Right ventricle myocardium superior (tissue), 1 donor: ENCODE measurements at regions of chr10 and their contacts with region 1.

Region 1: DNA sequence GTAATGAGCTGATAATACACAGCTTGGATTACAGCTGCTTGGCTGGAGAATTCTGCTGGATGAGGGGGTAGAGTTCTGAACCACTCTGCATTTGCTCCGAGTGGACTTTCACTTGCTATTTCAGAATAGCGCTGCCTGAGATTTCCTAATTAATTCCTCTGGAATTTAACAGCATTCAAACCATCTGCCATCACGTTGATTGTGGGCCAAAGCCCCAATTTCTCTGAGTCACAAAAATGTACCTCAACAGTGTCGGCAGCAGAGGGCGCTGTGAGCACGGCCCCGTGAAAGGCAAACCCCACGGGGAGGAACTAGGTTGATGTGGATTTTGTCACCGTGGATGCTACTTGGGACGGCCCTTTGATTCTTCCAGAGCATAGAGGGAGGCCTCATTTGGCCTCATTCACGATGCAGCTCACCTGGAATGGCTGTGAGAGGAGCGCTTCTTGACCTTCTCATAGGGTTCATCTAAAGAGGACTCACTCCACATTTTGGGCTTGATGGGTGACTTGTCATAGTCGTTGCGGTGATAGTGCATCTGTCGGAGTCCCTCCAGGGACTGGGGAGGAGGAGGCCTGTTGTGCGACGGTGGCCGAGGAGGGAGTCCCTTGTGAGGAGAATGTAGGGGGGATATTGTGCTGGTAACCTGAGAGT is 73.3 kb downstream of the PRPF18 start:
- DNase-seq: peak; percentile 81
- ATAC-seq: peak; percentile 72

Region 2: GRCh38 chr10:13613519-13613918 is 46.5 kb before region 1 on chr10:
- intact Hi-C with region 1: loop called (anchors 10 kb)
- DNase-seq: no peak
- ATAC-seq: peak; percentile 86

Region 3: GRCh38 chr10:13831711-13832141 is 171.7 kb after region 1 on chr10:
- intact Hi-C with region 1: no loop called
- DNase-seq: no peak
- ATAC-seq: peak; percentile 34